ENCODE measurements at regions of chr1 and their contacts with region 1.

Region 1: DNA sequence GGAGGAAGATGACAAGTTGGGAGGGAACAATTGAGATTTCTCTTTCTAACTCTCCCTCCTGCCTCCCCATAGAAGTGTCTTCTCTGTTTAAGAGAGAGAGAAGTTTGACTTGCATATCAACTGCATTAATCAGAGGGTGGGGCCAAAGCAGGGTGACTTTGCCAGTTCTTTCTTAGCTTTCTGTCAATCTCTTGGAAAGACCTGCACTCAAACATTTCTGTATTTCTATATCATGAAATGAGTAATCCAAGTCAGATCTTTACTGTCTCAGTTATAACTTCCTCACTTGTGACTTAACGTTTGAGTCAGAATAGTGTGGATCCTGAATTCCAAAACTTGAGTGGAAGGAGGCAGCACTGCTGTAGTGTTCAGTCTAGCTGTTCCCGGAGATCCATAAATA is 180.8 kb upstream of the KCNK2 start:
- DNase-seq: peak; percentile 78
- H3K4me3 ChIP-seq: no peak overlapping the region
- H3K27ac ChIP-seq: peak overlapping the region; percentile 92
- H3K4me1 ChIP-seq: peaks cover 29% of the 10 kb centered on the region
- H3K27me3 ChIP-seq: no peaks in the 10 kb centered on the region
- CTCF ChIP-seq: no peak

Region 2: GRCh38 chr1:214864896-214865688 is 36.6 kb before region 1 on chr1:
- CTCF ChIA-PET with region 1: interaction called, 6 read pairs
- dilution Hi-C with region 1: no loop called
- in situ Hi-C with region 1: no loop called
- intact Hi-C with region 1: loop called (anchors 1 kb)
- DNase-seq: peak; percentile 70
- H3K4me3 ChIP-seq: no peak overlapping the region
- H3K27ac ChIP-seq: no peak overlapping the region
- H3K4me1 ChIP-seq: peaks cover 14% of the 10 kb centered on the region
- H3K27me3 ChIP-seq: no peaks in the 10 kb centered on the region
- CTCF ChIP-seq: no peak

Region 3: GRCh38 chr1:214882616-214883015 is 19.1 kb before region 1 on chr1:
- CTCF ChIA-PET with region 1: no interaction called
- dilution Hi-C with region 1: no loop called
- in situ Hi-C with region 1: no loop called
- intact Hi-C with region 1: no loop called
- DNase-seq: no peak
- H3K4me3 ChIP-seq: no peak overlapping the region
- H3K27ac ChIP-seq: no peak overlapping the region
- H3K4me1 ChIP-seq: no peaks in the 10 kb centered on the region
- H3K27me3 ChIP-seq: no peaks in the 10 kb centered on the region
- CTCF ChIP-seq: no peak

Measured in mammary epithelial cell (primary cell).